ENCODE measurements at regions of chr1 and their contacts with region 1.

Region 1: DNA sequence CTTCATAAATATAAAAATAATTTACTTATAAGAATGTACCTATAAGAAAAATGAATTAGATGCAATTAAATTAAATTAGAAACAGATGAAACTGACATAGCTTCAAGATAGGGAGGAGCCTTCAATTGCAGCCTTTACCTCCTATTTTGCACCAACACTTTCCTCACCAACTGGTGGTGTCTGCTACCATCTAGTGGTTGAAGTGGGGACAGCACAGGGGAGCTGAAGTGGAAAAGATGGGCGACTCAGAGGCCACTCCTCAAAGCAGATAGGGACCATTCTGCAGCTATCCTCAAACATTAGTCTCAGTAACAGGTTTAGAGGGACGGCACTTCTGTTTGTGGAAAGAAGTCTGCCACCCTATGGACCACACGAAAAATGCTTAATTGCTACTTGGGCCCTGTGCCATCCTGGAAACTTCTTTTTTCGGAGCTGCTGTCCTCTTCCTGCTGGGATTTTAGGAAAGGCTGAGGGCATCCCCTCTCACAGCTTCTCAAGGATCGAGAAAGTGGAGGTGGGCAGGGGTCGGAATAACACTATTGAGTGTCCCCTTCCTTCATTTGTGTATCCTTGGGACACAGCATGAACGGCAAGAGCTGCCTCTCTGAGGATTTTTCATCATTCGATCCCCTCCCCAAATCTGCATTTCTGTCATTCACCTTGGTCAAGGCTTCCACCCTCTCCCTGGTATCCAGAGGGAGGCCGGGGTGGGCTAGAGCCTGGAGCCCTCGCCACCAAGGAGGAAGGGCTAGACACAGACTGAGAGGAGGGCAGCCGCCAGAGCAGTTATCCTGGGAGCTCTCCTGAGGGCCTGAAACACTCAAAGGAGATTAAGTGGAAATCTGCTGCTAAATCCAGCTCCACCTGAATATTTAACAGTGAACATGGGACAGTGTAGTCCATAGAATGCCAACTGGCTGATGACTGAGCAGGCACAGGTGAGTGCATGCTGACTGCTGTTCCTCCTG is 9.6 kb downstream of the PROK1 start:
- DNase-seq: no peak

Region 2: GRCh38 chr1:110034451-110035235 is 425.9 kb before region 1 on chr1 and contains the start of gene STRIP1:
- intact Hi-C with region 1: loop called (anchors 5 kb)
- DNase-seq: peak; percentile 96
- total RNA-seq, gene STRIP1: 23.8 TPM

Region 3: DNA sequence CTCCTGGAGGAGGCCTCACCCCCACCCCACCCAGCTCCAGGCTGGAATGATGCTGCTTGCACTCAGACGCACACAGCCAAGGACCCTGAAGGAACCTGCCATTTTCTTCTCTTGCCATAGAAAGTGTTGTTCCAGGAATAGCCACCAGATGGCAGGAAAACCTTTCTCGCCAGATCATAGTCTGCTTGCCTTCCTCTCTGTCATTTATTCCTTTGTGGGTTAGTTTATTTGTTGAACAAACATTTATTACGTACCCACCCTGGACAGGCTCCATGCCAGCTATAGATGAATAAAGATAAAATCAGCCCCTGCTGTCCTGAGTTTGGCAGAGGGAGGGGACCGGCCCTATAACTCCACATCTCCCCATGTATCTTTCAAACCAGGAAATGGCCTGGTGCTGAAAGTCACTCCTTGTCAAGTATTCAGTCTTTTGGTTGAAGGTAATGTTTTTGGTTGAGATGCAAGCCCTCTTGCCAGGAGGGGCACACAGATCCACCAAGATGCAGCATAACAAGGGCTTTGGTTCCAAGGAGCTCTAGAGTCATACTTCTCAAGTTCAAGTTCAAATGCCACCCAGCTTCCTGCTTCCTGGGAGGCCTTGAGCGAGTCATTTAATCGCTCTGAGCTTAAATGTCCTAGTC is 257.4 kb before region 1 on chr1:
- intact Hi-C with region 1: loop called (anchors 2 kb)
- DNase-seq: no peak

Region 4: GRCh38 chr1:110412576-110412975 is 48.0 kb before region 1 on chr1:
- intact Hi-C with region 1: loop called (anchors 1 kb)
- DNase-seq: no peak

Region 5: DNA sequence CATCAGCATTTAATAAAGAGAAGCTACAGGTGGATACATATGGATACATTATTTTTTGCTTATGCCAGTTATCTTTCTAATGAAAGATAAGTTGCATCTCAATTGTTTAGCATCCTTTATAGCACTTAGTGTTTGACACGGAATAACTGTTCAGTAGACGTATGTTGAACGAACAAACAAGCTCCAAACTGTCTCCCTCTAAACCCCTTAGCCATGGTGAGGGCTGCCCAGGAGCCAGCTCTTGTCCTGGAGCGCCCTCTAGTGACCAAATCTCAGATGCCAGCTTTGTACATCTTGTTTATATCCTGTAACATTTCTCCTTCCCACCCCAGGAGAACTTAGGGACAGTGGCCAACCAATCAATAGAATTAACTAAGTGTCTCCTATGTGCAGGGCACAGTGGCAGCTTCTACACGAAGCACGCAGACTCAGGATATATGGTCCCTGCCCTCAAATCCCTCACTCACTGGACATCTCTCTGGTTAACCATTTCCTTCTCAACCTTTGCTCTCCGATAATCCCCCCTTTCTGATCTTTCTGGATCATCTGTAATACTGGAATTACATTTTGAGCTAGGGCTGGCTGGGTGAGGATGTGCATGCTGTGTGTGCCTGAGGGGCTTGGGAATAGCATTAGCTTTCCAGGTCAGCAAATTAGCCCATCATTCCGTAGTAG is 35.5 kb after region 1 on chr1:
- intact Hi-C with region 1: loop called (anchors 2 kb)
- DNase-seq: no peak

Measured in cardiac septum (tissue), 1 donor.